Mammary epithelial cell (primary cell): ENCODE measurements at regions of chr10 and their contacts with region 1.

Region 1: GRCh38 chr10:106571192-106571946 is 593.1 kb downstream of the SORCS1 start:
- DNase-seq: peak; percentile 57
- H3K4me3 ChIP-seq: no peak overlapping the region
- H3K27ac ChIP-seq: peak overlapping the region; percentile 3
- H3K4me1 ChIP-seq: peaks cover 17% of the 10 kb centered on the region
- H3K27me3 ChIP-seq: no peaks in the 10 kb centered on the region
- CTCF ChIP-seq: peak; percentile 67 to 76

Region 2: GRCh38 chr10:106198275-106198674 is 373.1 kb before region 1 on chr10:
- CTCF ChIA-PET with region 1: no interaction called
- dilution Hi-C with region 1: no loop called
- in situ Hi-C with region 1: no loop called
- intact Hi-C with region 1: loop called (anchors 5 kb)
- DNase-seq: no peak
- H3K4me3 ChIP-seq: no peak overlapping the region
- H3K27ac ChIP-seq: no peak overlapping the region
- H3K4me1 ChIP-seq: no peaks in the 10 kb centered on the region
- H3K27me3 ChIP-seq: no peaks in the 10 kb centered on the region
- CTCF ChIP-seq: no peak

Region 3: DNA sequence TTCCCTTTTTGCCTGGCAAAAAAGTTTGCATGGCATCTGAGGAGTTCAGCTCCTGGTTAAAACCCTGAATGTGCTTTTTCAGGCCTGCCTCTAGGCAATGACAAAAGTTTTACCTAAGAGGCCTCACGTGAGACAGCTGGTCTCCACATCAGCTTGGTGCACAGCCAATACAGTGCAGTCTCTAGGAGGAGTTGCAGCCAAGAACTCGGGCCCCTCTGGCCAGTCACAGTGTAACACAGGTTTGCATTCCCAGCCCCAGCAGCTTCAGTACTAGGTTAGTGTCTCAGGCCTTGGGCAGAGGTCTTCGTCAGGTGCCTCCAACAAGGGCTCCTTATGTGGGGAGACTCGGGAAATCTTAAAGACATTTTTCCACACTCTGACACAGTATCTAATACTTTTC is 178.6 kb before region 1 on chr10:
- CTCF ChIA-PET with region 1: no interaction called
- dilution Hi-C with region 1: no loop called
- in situ Hi-C with region 1: loop called in 1 of 2 experiments (anchors 10 kb)
- intact Hi-C with region 1: no loop called
- DNase-seq: no peak
- H3K4me3 ChIP-seq: no peak overlapping the region
- H3K27ac ChIP-seq: no peak overlapping the region
- H3K4me1 ChIP-seq: peaks cover 6% of the 10 kb centered on the region
- H3K27me3 ChIP-seq: no peaks in the 10 kb centered on the region
- CTCF ChIP-seq: no peak

Region 4: GRCh38 chr10:106401161-106401560 is 170.2 kb before region 1 on chr10:
- CTCF ChIA-PET with region 1: interaction called, 3 read pairs
- dilution Hi-C with region 1: no loop called
- in situ Hi-C with region 1: loop called (anchors 5 to 10 kb)
- intact Hi-C with region 1: loop called (anchors 1 kb)
- DNase-seq: peak; percentile 26
- H3K4me3 ChIP-seq: no peak overlapping the region
- H3K27ac ChIP-seq: no peak overlapping the region
- H3K4me1 ChIP-seq: peaks cover 10% of the 10 kb centered on the region
- H3K27me3 ChIP-seq: no peaks in the 10 kb centered on the region
- CTCF ChIP-seq: peak; percentile 40 to 54

Region 5: GRCh38 chr10:106615081-106615480 is 43.7 kb after region 1 on chr10:
- CTCF ChIA-PET with region 1: no interaction called
- dilution Hi-C with region 1: no loop called
- in situ Hi-C with region 1: no loop called
- intact Hi-C with region 1: no loop called
- DNase-seq: peak; percentile 5
- H3K4me3 ChIP-seq: no peak overlapping the region
- H3K27ac ChIP-seq: no peak overlapping the region
- H3K4me1 ChIP-seq: peaks cover 6% of the 10 kb centered on the region
- H3K27me3 ChIP-seq: no peaks in the 10 kb centered on the region
- CTCF ChIP-seq: no peak